ENCODE measurements at regions of chr9 and their contacts with region 1.

Region 1: GRCh38 chr9:37324261-37324683 is 98.2 kb upstream of the GRHPR start:
- DNase-seq: peak; percentile 90
- ATAC-seq: peak; percentile 84
- H3K4me3 ChIP-seq: peak overlapping the region in 2 of 5 experiments; percentile 7 to 31
- H3K4me3 Mint-ChIP-seq: peak overlapping the region; percentile 76
- H3K27ac ChIP-seq: peak overlapping the region; percentile 97 to 98
- H3K27ac Mint-ChIP-seq: peak overlapping the region; percentile 100
- H3K4me1 ChIP-seq: peaks cover 43 to 78% of the 10 kb centered on the region in 2 donors
- H3K4me1 Mint-ChIP-seq: peaks cover 62% of the 10 kb centered on the region
- H3K27me3 ChIP-seq: no peaks in the 10 kb centered on the region
- H3K27me3 Mint-ChIP-seq: no peaks in the 10 kb centered on the region
- CTCF ChIP-seq: no peak

Region 2: GRCh38 chr9:37197158-37198038 is 126.9 kb before region 1 on chr9:
- CTCF ChIA-PET with region 1: interaction called, 10 read pairs
- POLR2A ChIA-PET with region 1: interaction called, 4 read pairs
- intact Hi-C with region 1: loop called (anchors 2 kb)
- DNase-seq: peak; percentile 83
- ATAC-seq: peak; percentile 79
- H3K4me3 ChIP-seq: peak overlapping the region in 3 of 5 experiments; percentile 13 to 35 (median 21)
- H3K4me3 Mint-ChIP-seq: peak overlapping the region; percentile 76
- H3K27ac ChIP-seq: peak overlapping the region; percentile 81 to 87
- H3K27ac Mint-ChIP-seq: peak overlapping the region; percentile 87
- H3K4me1 ChIP-seq: peaks cover 83 to 91% of the 10 kb centered on the region in 2 donors
- H3K4me1 Mint-ChIP-seq: peaks cover 82% of the 10 kb centered on the region
- H3K27me3 ChIP-seq: no peaks in the 10 kb centered on the region
- H3K27me3 Mint-ChIP-seq: no peaks in the 10 kb centered on the region
- CTCF ChIP-seq: no peak

Region 3: DNA sequence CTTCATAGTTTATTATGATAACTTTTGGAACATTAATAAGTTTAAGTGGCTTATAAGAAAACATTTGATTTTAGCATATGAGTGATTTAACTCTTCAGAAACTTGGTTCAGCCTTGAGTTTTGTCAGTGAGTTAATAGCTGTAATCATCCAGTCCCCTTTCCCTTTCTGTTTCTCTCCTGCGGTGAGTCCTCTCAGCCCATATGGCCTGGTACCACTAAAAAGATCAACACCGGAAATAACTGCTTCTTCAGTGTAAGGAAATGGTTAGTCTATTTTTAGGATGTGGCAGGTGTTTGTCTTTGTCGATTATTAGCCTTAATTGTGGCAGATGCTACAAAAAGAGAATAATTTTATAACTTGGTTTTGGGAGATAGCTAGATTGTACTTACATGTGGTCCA is 22.0 kb before region 1 on chr9:
- CTCF ChIA-PET with region 1: interaction called, 37 read pairs
- POLR2A ChIA-PET with region 1: interaction called, 14 read pairs
- intact Hi-C with region 1: loop called (anchors 1 kb)
- DNase-seq: peak; percentile 88
- ATAC-seq: peak; percentile 90
- H3K4me3 ChIP-seq: peak overlapping the region in 3 of 5 experiments; percentile 5 to 42 (median 17)
- H3K4me3 Mint-ChIP-seq: peak overlapping the region; percentile 82
- H3K27ac ChIP-seq: peak overlapping the region; percentile 79 to 88
- H3K27ac Mint-ChIP-seq: peak overlapping the region; percentile 96
- H3K4me1 ChIP-seq: peaks cover 79 to 84% of the 10 kb centered on the region in 2 donors
- H3K4me1 Mint-ChIP-seq: peaks cover 81% of the 10 kb centered on the region
- H3K27me3 ChIP-seq: no peaks in the 10 kb centered on the region
- H3K27me3 Mint-ChIP-seq: no peaks in the 10 kb centered on the region
- CTCF ChIP-seq: no peak

Region 4: DNA sequence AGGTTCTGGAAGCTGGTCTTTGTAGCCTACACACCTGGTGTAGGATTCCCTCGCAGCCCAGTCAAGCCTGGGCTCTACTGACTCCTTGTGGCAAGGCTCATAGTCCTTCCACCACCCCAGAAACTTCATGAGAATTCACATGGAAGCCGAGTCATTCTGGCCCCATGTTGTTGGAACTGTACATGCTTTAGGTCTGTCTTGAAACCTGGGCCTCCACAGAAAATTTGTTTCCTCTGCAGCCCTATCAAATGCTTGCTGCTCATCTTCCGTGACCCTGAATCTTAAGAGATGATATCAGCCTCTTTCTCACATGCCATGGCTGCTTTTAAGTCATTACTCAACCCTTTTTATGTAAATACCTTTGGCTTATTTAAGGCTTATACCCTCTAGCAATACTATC is 15.1 kb before region 1 on chr9:
- CTCF ChIA-PET with region 1: interaction called, 13 read pairs
- POLR2A ChIA-PET with region 1: interaction called, 14 read pairs
- intact Hi-C with region 1: loop called (anchors 1 kb)
- DNase-seq: peak; percentile 77
- ATAC-seq: peak; percentile 82
- H3K4me3 ChIP-seq: no peak overlapping the region
- H3K4me3 Mint-ChIP-seq: peak overlapping the region; percentile 16
- H3K27ac ChIP-seq: peak overlapping the region; percentile 5 to 64
- H3K27ac Mint-ChIP-seq: peak overlapping the region; percentile 84
- H3K4me1 ChIP-seq: peaks cover 27 to 42% of the 10 kb centered on the region in 2 donors
- H3K4me1 Mint-ChIP-seq: peaks cover 35% of the 10 kb centered on the region
- H3K27me3 ChIP-seq: no peaks in the 10 kb centered on the region
- H3K27me3 Mint-ChIP-seq: no peaks in the 10 kb centered on the region
- CTCF ChIP-seq: peak; percentile 76

Region 5: DNA sequence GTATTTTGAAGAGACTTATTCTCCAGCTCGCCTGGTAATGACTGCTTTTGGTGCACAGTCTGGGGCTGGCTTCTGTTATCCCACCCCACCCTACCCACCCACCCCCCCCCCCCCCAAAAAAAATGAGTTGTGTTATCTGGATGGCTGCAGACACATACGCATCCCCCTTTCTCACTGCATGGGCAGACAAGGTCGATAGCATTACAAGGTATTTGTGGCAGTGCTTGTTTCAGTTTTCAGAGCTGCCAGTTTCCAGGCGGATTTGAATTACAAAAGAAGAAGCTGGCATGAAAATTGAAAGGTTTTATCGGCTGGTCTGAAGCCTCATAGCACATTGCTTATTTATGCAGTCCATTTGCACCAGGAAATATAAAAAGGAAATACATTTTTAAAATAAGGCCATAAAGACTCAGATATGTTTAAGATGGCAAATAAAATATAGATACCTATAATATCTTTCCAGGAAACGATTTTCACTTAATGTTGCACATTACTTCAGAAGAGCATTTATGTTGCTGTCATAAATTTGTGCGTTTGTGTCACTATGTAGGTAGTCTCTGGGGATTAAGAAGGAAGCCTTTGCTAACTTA is 13.1 kb after region 1 on chr9:
- CTCF ChIA-PET with region 1: interaction called, 18 read pairs
- POLR2A ChIA-PET with region 1: no interaction called
- intact Hi-C with region 1: loop called (anchors 2 kb)
- DNase-seq: peak; percentile 49
- ATAC-seq: peak; percentile 50
- H3K4me3 ChIP-seq: peak overlapping the region in 3 of 5 experiments; percentile 10 to 42 (median 10)
- H3K4me3 Mint-ChIP-seq: peak overlapping the region; percentile 82
- H3K27ac ChIP-seq: peak overlapping the region; percentile 34 to 77
- H3K27ac Mint-ChIP-seq: peak overlapping the region; percentile 88
- H3K4me1 ChIP-seq: peaks cover 57 to 86% of the 10 kb centered on the region in 2 donors
- H3K4me1 Mint-ChIP-seq: peaks cover 53% of the 10 kb centered on the region
- H3K27me3 ChIP-seq: no peaks in the 10 kb centered on the region
- H3K27me3 Mint-ChIP-seq: no peaks in the 10 kb centered on the region
- CTCF ChIP-seq: no peak

Region 6: GRCh38 chr9:37784616-37785483 is 460.6 kb after region 1 on chr9 and contains the start of gene EXOSC3:
- CTCF ChIA-PET with region 1: no interaction called
- POLR2A ChIA-PET with region 1: no interaction called
- intact Hi-C with region 1: no loop called
- DNase-seq: peak; percentile 91
- ATAC-seq: peak; percentile 86
- H3K4me3 ChIP-seq: peak within 1 kb of the TSS; percentile 75 to 96 (median 87)
- H3K4me3 Mint-ChIP-seq: peak within 1 kb of the TSS; percentile 98
- H3K27ac ChIP-seq: peak within 1 kb of the TSS; percentile 69 to 86
- H3K27ac Mint-ChIP-seq: peak within 1 kb of the TSS; percentile 95
- H3K4me1 ChIP-seq: peaks cover 16 to 21% of the 10 kb centered on the region in 2 donors
- H3K4me1 Mint-ChIP-seq: peaks cover 33% of the 10 kb centered on the region
- H3K27me3 ChIP-seq: peaks cover 0 to 2% (median 0%) of the 10 kb centered on the region in 4 experiments
- H3K27me3 Mint-ChIP-seq: peaks cover 9% of the 10 kb centered on the region
- CTCF ChIP-seq: peak; percentile 26
- total RNA-seq, gene EXOSC3: 55.3 and 64.9 TPM in 2 replicates